ENCODE measurements at regions of chr1 and their contacts with region 1.

Region 1: DNA sequence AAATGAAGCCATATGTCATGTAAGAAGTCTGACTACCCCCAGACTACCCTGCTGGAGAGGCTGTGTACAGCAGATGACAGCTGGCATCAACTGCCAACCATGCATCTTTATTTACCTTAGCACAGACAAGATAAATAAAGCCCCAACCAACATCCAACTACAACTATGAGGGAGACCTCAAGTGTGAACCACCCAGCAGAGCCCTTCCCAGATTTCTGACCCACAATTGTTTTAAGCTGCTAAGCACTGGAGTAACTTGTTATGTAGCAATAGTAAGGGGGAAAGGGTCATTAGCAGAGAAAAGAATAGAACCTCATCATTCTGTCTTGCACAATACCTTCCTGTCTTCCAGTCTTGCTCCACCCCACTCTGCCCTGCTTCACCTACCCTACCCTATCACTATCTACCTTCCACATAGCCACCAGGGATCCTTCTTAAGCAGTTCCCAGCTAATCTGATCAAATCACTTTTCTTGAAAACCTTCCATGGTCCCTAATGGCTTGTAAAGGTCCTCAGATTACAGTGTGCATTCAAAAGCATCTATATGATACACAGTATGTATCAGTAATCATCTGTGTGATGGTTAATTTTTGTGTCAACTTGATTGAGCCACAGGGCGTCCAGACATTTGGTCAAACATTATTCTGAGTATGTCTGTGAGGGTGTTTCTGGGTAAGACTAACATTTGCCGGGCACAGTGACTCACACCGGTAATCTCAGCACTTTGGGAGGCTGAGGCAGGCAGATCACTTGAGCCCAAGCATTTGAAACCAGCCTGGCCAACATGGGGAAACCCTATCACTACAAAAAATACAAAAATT is 19.6 kb upstream of the RBM15 start:
- DNase-seq: no peak
- CTCF ChIP-seq: no peak

Region 2: DNA sequence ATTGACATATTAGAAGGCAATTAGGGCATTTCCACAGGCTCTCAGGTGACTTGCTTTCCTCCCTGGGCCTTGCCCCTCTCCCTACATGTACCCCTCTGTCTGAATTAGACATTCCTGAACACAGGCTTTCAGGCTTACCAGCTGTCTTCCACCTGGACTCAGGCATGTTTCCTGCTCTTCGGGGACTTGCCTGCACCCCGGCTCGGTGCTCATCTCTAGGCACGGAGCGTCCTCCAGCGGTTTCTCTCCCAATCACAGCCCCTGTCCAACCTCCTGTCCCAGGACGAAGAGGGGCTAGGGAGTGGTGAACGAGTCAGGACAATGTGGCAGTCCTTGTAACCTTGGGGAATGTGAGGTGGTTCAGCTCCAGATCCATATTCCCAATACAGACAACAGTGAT is 135.6 kb after region 1 on chr1:
- in situ Hi-C with region 1: loop called (anchors 10 kb)
- DNase-seq: no peak
- CTCF ChIP-seq: no peak

Region 3: DNA sequence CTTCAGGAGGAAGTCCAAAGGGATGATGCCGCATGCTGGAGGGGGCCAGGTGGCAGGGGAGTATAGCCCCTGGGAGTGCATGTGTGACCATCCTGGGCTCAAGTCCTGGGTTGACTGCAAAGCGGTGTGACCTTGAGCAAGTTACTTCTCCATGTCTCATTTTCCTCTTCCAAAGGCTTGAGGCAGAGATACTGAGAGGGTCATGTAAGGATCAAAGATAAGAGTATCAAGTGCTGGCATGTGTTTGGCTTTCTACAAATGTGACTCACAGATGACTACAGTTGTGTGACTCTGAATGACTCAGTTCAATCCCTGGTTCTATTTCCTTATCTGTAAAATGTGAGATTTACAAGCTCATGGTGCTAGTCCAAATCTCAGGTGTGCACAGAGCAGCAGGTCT is 157.5 kb after region 1 on chr1:
- in situ Hi-C with region 1: no loop called
- DNase-seq: no peak
- CTCF ChIP-seq: no peak